MCF 10A (cell line): ENCODE measurements at regions of chr5 and their contacts with region 1.

Region 1: GRCh38 chr5:104573949-104574709 is 1011.5 kb upstream of the NUDT12 start:
- DNase-seq: no peak
- H3K4me3 Mint-ChIP-seq: no peak overlapping the region
- H3K27ac Mint-ChIP-seq: no peak overlapping the region
- H3K4me1 Mint-ChIP-seq: no peaks in the 10 kb centered on the region
- H3K27me3 Mint-ChIP-seq: no peaks in the 10 kb centered on the region
- CTCF ChIP-seq: no peak

Region 2: GRCh38 chr5:104443706-104444105 is 130.4 kb before region 1 on chr5:
- CTCF ChIA-PET with region 1: no interaction called
- POLR2A ChIA-PET with region 1: no interaction called
- intact Hi-C with region 1: no loop called
- DNase-seq: no peak
- H3K4me3 Mint-ChIP-seq: no peak overlapping the region
- H3K27ac Mint-ChIP-seq: no peak overlapping the region
- H3K4me1 Mint-ChIP-seq: no peaks in the 10 kb centered on the region
- H3K27me3 Mint-ChIP-seq: no peaks in the 10 kb centered on the region
- CTCF ChIP-seq: no peak

Region 3: GRCh38 chr5:104800436-104801048 is 226.4 kb after region 1 on chr5:
- CTCF ChIA-PET with region 1: no interaction called
- POLR2A ChIA-PET with region 1: no interaction called
- intact Hi-C with region 1: loop called (anchors 10 kb)
- DNase-seq: peak; percentile 16
- H3K4me3 Mint-ChIP-seq: no peak overlapping the region
- H3K27ac Mint-ChIP-seq: no peak overlapping the region
- H3K4me1 Mint-ChIP-seq: no peaks in the 10 kb centered on the region
- H3K27me3 Mint-ChIP-seq: no peaks in the 10 kb centered on the region
- CTCF ChIP-seq: peak; percentile 30